ENCODE measurements at regions of chr5 and their contacts with region 1.

Region 1: DNA sequence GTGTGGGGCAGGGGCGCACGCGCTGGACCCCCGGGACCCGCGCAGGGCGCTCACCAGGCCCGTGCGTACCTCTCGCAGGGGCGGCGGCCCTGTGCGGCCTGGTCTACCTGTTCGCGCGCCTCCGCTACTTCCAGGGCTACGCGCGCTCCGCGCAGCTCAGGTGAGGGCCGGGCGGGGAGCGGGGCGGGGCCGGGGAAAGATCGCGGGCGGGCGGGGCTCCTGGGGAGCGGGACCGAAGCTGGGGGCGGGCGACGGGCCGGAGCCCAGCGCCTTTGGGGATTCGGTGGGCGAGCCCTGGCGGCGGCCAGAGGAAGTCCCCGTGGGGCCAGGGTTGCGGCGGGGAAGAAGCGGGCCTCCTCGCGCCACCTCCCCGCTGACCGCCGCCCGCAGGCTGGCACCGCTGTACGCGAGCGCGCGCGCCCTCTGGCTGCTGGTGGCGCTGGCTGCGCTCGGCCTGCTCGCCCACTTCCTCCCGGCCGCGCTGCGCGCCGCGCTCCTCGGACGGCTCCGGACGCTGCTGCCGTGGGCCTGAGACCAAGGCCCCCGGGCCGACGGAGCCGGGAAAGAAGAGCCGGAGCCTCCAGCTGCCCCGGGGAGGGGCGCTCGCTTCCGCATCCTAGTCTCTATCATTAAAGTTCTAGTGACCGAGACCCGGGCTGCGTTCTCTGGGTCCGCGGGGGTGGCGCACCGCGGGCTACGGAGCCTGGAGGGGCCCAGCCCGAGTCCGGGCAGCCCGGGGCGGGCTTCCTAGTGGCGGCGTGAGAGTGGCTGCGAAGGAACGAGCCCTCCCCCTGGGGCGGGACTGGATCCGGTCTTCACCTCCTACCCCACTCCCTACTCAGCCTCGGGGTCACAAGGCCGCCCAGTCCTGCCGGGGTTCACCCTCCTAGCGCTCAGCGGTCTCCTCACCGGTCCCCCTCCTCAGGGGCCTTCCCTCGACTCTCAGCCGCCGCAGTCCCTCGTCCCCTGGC is 2.4 kb downstream of the LTC4S start:
- DNase-seq: peak; percentile 69 to 89 (median 76)
- H3K4me3 ChIP-seq: peak overlapping the region; percentile 28 to 76 (median 66)
- H3K27ac ChIP-seq: peak overlapping the region in 1 of 2 experiments; percentile 34
- H3K4me1 ChIP-seq: peaks cover 5 to 56% (median 54%) of the 10 kb centered on the region in 4 experiments
- H3K27me3 ChIP-seq: no peaks in the 10 kb centered on the region

Region 2: DNA sequence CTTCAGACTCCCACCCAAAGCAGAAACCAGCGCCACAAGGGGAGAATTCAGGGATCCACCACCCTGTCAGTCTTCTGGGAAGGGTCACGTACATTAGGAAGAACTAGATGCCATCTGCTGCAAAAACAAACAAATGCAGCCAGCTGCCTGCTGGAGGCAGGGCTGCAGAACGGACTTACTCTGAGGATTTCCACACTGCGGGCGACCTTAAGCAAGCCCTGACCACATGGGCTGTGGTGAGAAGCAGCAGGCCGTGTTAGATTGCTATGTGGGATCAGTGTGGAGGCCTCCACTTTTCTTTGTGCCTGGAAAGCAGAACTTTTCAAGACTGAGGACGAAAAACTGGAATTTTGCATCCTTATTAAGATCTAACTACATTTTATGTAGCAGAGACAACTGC is 15.8 kb before region 1 on chr5:
- CTCF ChIA-PET with region 1: interaction called, 37 read pairs
- POLR2A ChIA-PET with region 1: interaction called, 3 read pairs
- DNase-seq: no peak
- H3K4me3 ChIP-seq: no peak overlapping the region
- H3K27ac ChIP-seq: no peak overlapping the region
- H3K4me1 ChIP-seq: peaks cover 0 to 33% (median 10%) of the 10 kb centered on the region in 4 experiments
- H3K27me3 ChIP-seq: no peaks in the 10 kb centered on the region

Region 3: DNA sequence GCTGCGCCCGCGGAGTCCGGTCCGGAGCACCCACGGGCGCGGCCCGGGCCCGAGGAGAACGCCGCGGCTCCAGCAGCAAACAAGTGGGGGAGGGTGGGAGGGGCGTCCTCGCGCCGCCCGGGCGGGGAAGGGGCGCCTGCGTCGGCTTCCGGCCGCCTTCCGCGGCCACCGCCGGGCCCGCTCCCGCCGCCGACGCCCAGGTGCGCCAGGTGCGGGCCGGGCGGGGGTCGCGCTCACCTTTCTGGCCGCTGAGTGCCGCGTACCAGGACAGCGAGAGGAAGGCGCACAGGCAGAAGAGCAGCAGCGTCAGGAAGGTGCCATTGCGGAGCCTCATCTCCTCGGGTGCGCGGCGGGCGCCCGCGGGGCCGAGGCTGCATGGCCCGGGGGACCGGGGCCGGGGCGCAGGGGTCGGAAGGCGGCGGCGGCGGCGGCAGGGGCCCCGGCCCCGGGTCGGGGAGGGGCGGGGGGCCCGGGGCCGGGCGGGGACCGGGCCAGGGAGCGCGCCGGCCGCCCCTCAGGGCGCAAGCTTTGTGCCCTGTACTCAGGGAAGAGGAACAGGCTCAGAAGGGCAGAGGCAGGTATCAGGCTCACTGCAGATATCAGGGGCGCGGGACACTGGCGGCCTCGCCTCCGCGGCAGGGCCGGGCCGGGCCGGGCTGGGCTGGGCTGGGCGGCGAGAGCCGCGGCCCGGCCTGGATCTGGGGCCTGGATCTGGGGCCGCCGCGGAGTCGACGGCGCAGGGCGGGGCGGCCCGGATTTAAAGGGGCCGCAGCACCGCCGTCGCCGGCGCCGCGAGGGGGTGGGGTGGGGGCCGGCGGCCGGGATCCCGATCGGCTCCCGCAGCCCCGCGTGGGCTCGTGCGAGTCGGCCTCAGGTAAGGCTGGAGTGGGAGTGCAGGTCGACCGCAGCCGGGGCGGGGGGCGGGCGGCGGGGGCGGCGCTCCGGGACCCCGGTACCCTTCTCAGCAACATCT is 10.4 kb after region 1 on chr5 and contains the start of gene MGAT4B:
- CTCF ChIA-PET with region 1: interaction called, 19 read pairs
- POLR2A ChIA-PET with region 1: interaction called, 4 read pairs
- DNase-seq: peak in 2 of 3 donors; percentile 74 to 82
- H3K4me3 ChIP-seq: peak within 1 kb of the TSS; percentile 65 to 83 (median 75)
- H3K27ac ChIP-seq: peak within 1 kb of the TSS in 1 of 2 experiments; percentile 64
- H3K4me1 ChIP-seq: peaks cover 4 to 49% (median 41%) of the 10 kb centered on the region in 4 experiments
- H3K27me3 ChIP-seq: no peaks in the 10 kb centered on the region

Region 4: GRCh38 chr5:179821581-179822432 is 25.7 kb after region 1 on chr5:
- CTCF ChIA-PET with region 1: interaction called, 124 read pairs
- POLR2A ChIA-PET with region 1: interaction called, 131 read pairs
- DNase-seq: peak; percentile 90 to 95 (median 94)
- H3K4me3 ChIP-seq: peak overlapping the region; percentile 82 to 96 (median 89)
- H3K27ac ChIP-seq: peak overlapping the region; percentile 92 to 95
- H3K4me1 ChIP-seq: peaks cover 0 to 53% (median 46%) of the 10 kb centered on the region in 4 experiments
- H3K27me3 ChIP-seq: no peaks in the 10 kb centered on the region

Measured in common myeloid progenitor, CD34-positive (primary cell).